ENCODE measurements at regions of chr2 and their contacts with region 1.

Region 1: DNA sequence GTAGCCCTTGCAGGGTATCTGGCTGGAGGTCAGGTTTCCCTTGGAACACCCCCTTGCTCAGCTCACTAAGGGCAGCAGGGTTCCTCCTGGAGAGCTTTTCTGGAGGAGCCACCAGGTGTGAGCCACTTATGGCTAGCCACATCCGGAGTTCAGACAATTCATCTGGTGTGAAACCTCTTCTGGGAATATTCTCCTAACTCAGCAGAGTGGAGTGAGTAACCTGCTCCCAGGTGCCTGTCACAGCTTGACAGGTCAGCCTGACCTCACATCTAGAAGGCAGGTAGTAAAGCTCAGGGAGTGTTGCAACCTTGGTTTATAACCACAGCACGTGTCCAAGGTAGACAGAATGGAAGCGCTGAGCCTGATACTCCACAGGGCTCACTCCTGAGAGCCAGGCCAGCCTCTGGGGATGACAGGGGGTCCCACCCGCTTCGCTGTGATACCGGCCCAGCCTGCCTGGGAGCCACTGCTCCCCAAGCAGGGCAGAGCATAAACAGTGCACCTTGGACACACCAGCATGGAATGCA is 62.6 kb upstream of the TGFA start:
- DNase-seq: no peak
- ATAC-seq: no peak
- H3K4me3 Mint-ChIP-seq: no peak overlapping the region
- H3K27ac Mint-ChIP-seq: no peak overlapping the region
- H3K4me1 Mint-ChIP-seq: no peaks in the 10 kb centered on the region
- H3K27me3 Mint-ChIP-seq: peaks cover 3% of the 10 kb centered on the region
- CTCF ChIP-seq: no peak

Region 2: GRCh38 chr2:70340921-70341765 is 275.1 kb before region 1 on chr2:
- CTCF ChIA-PET with region 1: interaction called, 86 read pairs
- POLR2A ChIA-PET with region 1: no interaction called
- intact Hi-C with region 1: no loop called
- DNase-seq: peak; percentile 26
- ATAC-seq: peak; percentile 77
- H3K4me3 Mint-ChIP-seq: no peak overlapping the region
- H3K27ac Mint-ChIP-seq: no peak overlapping the region
- H3K4me1 Mint-ChIP-seq: no peaks in the 10 kb centered on the region
- H3K27me3 Mint-ChIP-seq: peaks cover 2% of the 10 kb centered on the region
- CTCF ChIP-seq: peak; percentile 93

Region 3: DNA sequence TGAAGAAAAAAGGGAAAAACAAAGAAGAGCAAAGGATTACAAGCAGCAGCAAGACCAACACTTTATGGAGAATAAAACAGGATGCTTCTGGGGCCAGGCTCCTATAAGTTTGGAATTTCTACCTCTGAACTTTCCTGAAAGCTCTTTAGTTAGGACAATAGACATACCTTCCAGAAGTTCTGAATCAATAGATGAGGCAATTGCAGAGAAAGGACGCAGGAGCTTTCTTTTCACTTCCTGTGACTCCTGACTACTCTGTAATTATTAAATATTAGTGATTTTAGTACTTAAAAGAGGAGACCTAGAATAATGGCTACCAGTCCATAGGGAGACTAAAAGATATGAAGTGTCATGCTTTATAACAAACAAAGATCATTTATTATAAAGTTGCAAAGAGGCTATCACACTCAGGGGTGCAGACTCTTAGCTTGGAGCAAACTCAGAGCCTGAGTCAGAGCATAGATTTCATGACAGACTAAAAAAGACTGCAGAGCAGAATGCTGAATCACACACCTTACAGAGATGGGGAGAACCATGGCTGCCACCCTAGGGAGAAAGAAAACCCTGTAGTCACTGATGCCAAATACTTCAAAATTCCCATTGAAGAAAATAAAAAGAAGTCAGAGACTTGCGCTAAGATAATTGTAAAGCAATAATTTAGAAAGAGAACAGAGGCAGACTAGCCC is 261.8 kb before region 1 on chr2:
- CTCF ChIA-PET with region 1: interaction called, 11 read pairs
- POLR2A ChIA-PET with region 1: no interaction called
- intact Hi-C with region 1: no loop called
- DNase-seq: no peak
- ATAC-seq: no peak
- H3K4me3 Mint-ChIP-seq: no peak overlapping the region
- H3K27ac Mint-ChIP-seq: no peak overlapping the region
- H3K4me1 Mint-ChIP-seq: no peaks in the 10 kb centered on the region
- H3K27me3 Mint-ChIP-seq: peaks cover 8% of the 10 kb centered on the region
- CTCF ChIP-seq: no peak

Region 4: DNA sequence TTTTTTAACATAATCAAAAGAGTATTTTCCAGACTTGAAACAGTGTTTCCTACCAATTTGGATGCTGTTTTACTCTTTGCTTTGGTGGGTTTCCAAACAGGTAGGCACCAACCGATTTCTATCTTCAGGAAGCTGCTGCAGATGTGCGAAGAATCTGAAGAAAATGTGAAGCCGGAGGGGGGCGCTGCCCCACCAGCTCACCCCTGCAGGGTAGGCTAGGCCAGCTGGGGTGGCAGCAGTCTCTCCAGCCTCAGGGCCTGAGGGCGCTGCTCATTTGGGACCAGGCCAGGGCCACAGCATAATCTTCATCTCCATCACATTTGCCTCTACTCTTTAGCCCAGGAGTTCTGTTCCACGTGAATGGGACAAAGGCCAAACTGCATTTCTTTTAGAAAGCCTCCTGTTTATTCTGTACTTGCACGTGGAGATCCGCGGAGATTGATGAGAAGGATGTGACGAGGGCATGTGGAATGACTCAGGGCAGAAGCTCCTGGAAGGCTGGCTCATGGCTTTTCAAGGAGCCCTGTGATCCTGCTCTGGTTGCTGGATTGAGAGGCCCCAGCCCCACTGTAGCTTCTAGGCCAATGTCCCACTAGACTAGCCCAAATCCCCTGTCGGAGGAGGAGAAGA is 230.2 kb before region 1 on chr2:
- CTCF ChIA-PET with region 1: no interaction called
- POLR2A ChIA-PET with region 1: no interaction called
- intact Hi-C with region 1: no loop called
- DNase-seq: no peak
- ATAC-seq: no peak
- H3K4me3 Mint-ChIP-seq: no peak overlapping the region
- H3K27ac Mint-ChIP-seq: no peak overlapping the region
- H3K4me1 Mint-ChIP-seq: no peaks in the 10 kb centered on the region
- H3K27me3 Mint-ChIP-seq: peaks cover 1% of the 10 kb centered on the region
- CTCF ChIP-seq: no peak

Region 5: GRCh38 chr2:70553584-70554337 is 62.5 kb before region 1 on chr2 and contains the start of gene TGFA:
- CTCF ChIA-PET with region 1: interaction called, 23 read pairs
- POLR2A ChIA-PET with region 1: no interaction called
- intact Hi-C with region 1: loop called (anchors 10 kb)
- DNase-seq: peak; percentile 77
- ATAC-seq: peak; percentile 89
- H3K4me3 Mint-ChIP-seq: peak within 1 kb of the TSS; percentile 73
- H3K27ac Mint-ChIP-seq: peak within 1 kb of the TSS; percentile 27
- H3K4me1 Mint-ChIP-seq: peaks cover 24% of the 10 kb centered on the region
- H3K27me3 Mint-ChIP-seq: peaks cover 17% of the 10 kb centered on the region
- CTCF ChIP-seq: peak; percentile 84
- total RNA-seq, gene TGFA: 0.25 to 0.38 TPM

Region 6: DNA sequence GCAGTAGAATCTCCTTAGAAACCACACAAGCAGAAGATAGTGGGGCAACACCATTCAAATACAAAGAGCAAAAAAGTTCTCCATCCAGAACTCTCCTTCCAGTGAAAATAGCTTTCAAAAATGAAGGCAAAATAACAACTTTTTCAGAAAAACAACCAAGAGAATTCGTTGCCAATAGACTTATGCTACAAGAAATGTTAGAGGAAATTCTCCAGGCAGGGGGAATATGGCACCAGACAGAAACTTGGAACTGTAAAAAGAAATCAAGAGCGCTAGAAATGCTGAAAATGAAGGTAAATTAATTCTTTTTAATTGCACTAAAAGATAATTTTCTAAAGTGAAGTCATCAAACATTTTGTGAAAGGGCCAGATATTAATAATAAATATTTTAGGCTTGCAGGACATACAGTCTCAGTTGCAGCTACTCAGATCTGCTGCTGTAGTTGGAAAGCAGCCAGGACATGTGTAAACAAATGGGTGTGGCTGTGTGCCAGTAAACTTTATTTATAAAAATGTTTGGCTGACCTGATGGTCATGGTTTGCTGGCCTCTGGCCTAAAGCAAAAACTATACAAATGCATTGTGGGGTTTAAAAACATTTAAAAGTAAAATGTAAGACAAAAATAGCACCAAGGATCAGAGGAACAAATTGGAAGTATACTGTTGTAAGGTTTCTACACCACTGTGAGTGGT is 11.1 kb after region 1 on chr2:
- CTCF ChIA-PET with region 1: interaction called, 10 read pairs
- POLR2A ChIA-PET with region 1: no interaction called
- intact Hi-C with region 1: no loop called
- DNase-seq: no peak
- ATAC-seq: no peak
- H3K4me3 Mint-ChIP-seq: no peak overlapping the region
- H3K27ac Mint-ChIP-seq: no peak overlapping the region
- H3K4me1 Mint-ChIP-seq: no peaks in the 10 kb centered on the region
- H3K27me3 Mint-ChIP-seq: peaks cover 2% of the 10 kb centered on the region
- CTCF ChIP-seq: no peak

Region 7: DNA sequence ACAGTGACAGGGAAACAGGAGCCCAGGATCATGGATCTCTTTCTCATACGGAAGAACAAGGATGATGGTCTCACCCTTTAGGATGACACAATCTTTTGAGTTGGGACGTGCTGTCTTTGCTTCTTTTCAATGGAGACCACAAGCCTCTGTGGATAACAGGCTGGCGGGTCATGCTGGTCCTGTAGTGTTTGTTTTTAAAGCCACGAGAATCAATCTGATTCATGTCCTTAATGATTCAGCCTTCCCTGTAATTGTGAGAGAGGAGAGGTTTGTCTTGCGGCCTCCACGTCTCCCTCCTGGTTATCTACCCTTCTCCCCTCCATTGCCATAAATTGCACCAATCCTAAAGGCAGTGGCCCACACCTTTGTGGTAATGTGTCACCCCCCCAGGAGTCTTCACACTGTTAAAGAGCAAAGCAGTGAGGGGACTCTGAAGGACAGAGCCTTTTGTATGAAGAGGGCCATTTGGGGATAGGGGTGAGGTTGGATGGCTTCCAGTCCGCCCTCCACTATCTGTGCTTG is 25.1 kb after region 1 on chr2:
- CTCF ChIA-PET with region 1: interaction called, 29 read pairs
- POLR2A ChIA-PET with region 1: interaction called, 5 read pairs
- intact Hi-C with region 1: no loop called
- DNase-seq: no peak
- ATAC-seq: peak; percentile 45
- H3K4me3 Mint-ChIP-seq: no peak overlapping the region
- H3K27ac Mint-ChIP-seq: no peak overlapping the region
- H3K4me1 Mint-ChIP-seq: peaks cover 12% of the 10 kb centered on the region
- H3K27me3 Mint-ChIP-seq: no peaks in the 10 kb centered on the region
- CTCF ChIP-seq: no peak

Region 8: GRCh38 chr2:70647873-70648481 is 31.7 kb after region 1 on chr2:
- CTCF ChIA-PET with region 1: interaction called, 29 read pairs
- POLR2A ChIA-PET with region 1: no interaction called
- intact Hi-C with region 1: no loop called
- DNase-seq: peak; percentile 88
- ATAC-seq: peak; percentile 92
- H3K4me3 Mint-ChIP-seq: no peak overlapping the region
- H3K27ac Mint-ChIP-seq: no peak overlapping the region
- H3K4me1 Mint-ChIP-seq: no peaks in the 10 kb centered on the region
- H3K27me3 Mint-ChIP-seq: peaks cover 6% of the 10 kb centered on the region
- CTCF ChIP-seq: peak; percentile 96